ENCODE measurements at regions of chr12 and their contacts with region 1.

Region 1: DNA sequence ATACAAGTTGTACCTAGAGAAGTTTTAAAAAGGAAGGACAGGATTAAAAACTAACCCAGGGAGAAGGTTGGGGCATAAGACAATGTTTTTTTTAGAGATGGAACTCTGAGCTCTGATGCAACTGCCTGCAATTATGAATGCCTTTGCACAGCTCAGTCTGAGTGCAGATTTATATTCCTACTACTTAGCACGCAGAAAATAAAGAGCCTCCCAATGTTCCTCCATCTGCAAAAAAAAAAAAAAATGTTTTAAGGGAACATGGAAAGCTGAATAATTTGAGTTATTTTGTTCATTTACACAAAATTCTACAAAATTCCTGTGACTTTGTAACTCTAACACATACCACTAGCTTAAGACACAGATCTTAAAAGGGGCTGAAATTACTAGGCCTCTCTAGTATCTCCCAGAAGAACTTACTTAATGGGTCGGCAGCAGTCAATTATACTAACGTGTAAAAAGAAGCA is 15.7 kb downstream of the CLIP1 start:
- DNase-seq: peak; percentile 52
- ATAC-seq: peak; percentile 72
- H3K4me3 ChIP-seq: peak overlapping the region in 2 of 3 experiments; percentile 37 to 38; a peak in 3 of 6 replicates
- H3K27ac ChIP-seq: peak overlapping the region; percentile 79
- H3K4me1 ChIP-seq: peaks cover 37% of the 10 kb centered on the region
- H3K27me3 ChIP-seq: no peaks in the 10 kb centered on the region
- CTCF ChIP-seq: no peak
- EP300 ChIP-seq: peak in 1 of 2 experiments; percentile 68; a peak in 2 of 4 replicates
- POLR2A ChIP-seq: no peak
- RAD21 ChIP-seq: no peak

Region 2: DNA sequence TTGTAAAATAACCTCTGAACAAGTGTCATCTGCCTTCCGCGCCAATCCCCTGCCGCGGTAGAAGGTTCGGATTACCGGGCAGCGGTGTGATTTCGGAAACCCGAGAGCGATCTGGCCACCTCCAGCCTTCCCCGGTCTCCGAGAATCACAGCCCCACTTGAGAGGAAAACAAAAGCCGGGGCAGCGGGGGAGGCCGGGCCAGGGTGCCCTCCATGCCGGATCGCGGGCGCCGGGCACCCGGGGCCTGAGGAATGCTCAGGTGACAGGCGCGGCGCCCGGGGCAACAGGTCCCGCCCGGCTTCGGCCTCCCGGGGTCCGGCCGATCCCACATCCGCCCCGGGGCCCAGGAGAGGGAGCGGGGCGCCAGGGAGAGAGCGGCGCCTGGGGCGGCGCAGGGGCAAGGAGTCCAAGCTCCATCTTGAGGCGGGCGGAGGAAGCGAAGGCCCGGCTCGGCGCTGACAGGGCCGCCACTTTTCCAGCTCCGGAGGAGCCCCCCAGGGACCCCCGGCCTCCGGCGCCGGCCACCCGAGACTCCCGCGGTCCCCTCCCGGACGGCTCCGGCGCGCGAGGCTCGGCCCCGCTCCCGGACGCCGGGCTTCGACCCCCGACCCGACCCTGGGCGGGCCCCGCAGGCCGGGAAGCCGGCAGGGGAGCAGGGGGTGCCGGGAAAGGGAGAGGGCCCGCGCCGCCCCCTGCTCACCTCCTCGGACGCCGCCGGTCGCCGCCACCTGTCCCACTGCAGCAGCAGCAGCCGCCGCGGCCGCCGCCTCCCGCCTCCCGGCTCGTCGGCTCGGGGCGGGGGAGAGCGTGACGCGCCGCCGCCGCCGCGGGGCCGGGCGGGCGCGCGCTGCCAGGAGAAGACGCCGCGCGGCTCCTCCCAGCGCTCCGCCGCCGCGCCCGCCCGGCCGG is 15.3 kb after region 1 on chr12 and contains the start of gene CLIP1:
- CTCF ChIA-PET with region 1: no interaction called
- POLR2A ChIA-PET with region 1: interaction called, 127 read pairs
- in situ Hi-C with region 1: no loop called
- intact Hi-C with region 1: loop called (anchors 1 kb)
- DNase-seq: peak; percentile 27
- ATAC-seq: peak; percentile 67
- H3K4me3 ChIP-seq: peak within 1 kb of the TSS; percentile 80 to 82 (median 81)
- H3K27ac ChIP-seq: peak within 1 kb of the TSS; percentile 76
- H3K4me1 ChIP-seq: peaks cover 59% of the 10 kb centered on the region
- H3K27me3 ChIP-seq: no peaks in the 10 kb centered on the region; a peak in 1 of 5 replicates
- CTCF ChIP-seq: peak; percentile 49
- EP300 ChIP-seq: no peak
- POLR2A ChIP-seq: peak in 1 of 2 experiments; percentile 23; a peak in 1 of 4 replicates
- RAD21 ChIP-seq: peak; percentile 53; the same call in 1 of the 2 replicates
- total RNA-seq, gene CLIP1: 28.9 and 30.2 TPM in 2 replicates

Region 3: DNA sequence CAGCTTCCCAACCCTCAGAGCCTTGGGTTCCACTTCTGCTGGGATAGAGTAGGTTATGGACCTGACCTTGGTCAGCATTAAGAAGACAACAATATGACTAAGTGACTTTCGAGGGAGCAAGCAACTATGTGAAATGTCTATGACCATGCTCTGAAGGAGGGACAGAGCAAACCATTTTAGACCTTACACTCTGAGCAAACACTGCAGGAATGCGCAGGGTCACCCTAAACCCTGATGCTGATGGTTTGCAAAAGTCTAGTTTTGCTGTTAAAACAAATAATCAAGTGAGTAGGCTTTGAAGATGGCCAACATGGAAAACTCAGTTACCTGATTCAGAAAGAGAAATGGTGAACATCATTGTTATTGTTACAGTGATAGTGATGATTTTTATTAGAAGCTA is 85.3 kb after region 1 on chr12:
- CTCF ChIA-PET with region 1: no interaction called
- POLR2A ChIA-PET with region 1: interaction called, 11 read pairs
- in situ Hi-C with region 1: no loop called
- intact Hi-C with region 1: no loop called
- DNase-seq: peak; percentile 89
- ATAC-seq: peak; percentile 91
- H3K4me3 ChIP-seq: no peak overlapping the region
- H3K27ac ChIP-seq: peak overlapping the region; percentile 69
- H3K4me1 ChIP-seq: peaks cover 88% of the 10 kb centered on the region
- H3K27me3 ChIP-seq: no peaks in the 10 kb centered on the region
- CTCF ChIP-seq: no peak
- EP300 ChIP-seq: peak; percentile 26 to 86; a peak in 3 of 4 replicates
- POLR2A ChIP-seq: no peak
- RAD21 ChIP-seq: no peak

Region 4: DNA sequence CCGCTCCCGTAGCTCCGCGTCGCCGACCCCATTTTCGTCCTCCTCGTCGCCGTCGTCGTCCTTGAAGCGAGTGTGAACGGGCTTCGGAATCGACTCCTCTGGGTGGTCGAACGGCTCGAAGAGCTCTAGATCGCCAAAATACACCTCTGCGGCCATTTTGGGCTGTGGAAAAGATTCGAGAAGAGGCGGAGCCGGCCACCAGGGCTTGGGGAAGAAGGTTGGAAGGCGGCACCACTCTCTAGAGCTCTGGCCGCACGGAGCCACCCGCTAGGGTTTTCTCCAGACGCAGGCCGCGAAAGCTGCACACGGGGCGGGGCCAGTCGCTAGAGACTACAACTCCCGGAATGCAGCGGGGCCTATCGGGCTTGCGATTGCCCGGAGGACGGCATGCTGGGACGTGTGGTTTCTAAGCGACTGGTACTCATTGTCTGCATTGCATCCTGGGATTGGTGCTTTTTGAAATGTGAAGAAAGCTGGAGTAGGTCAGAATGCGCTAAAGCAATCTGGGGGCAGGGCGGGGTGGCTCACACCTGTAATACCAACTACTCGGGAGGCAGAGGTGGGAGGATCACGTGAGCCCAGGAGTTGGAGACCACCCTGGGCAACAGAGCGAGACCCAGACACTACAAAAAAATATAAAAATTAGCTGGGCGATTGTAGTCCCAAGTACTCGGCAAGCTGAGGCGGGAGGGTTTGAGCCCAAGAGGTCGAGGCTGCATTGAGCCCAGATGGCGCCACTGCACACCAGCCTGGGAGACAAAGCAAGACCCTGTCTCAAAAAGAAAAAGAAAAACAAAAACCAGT is 94.2 kb after region 1 on chr12 and contains the start of gene ZCCHC8:
- CTCF ChIA-PET with region 1: no interaction called
- POLR2A ChIA-PET with region 1: interaction called, 59 read pairs
- in situ Hi-C with region 1: no loop called
- intact Hi-C with region 1: no loop called
- DNase-seq: peak; percentile 96
- ATAC-seq: peak; percentile 94
- H3K4me3 ChIP-seq: peak within 1 kb of the TSS; percentile 84 to 98 (median 86)
- H3K27ac ChIP-seq: peak within 1 kb of the TSS; percentile 98
- H3K4me1 ChIP-seq: peaks cover 34% of the 10 kb centered on the region
- H3K27me3 ChIP-seq: no peaks in the 10 kb centered on the region; a peak in 1 of 5 replicates
- CTCF ChIP-seq: peak; percentile 45
- EP300 ChIP-seq: no peak; a peak in 1 of 4 replicates
- POLR2A ChIP-seq: peak; percentile 78 to 92
- RAD21 ChIP-seq: no peak
- total RNA-seq, gene ZCCHC8: 14.2 and 20.9 TPM in 2 replicates

Region 5: GRCh38 chr12:122526683-122527477 is 120.1 kb after region 1 on chr12 and contains the starts of genes KNTC1 and RSRC2:
- CTCF ChIA-PET with region 1: no interaction called
- POLR2A ChIA-PET with region 1: interaction called, 11 read pairs
- in situ Hi-C with region 1: no loop called
- intact Hi-C with region 1: no loop called
- DNase-seq: peak; percentile 99
- ATAC-seq: peak; percentile 92
- H3K4me3 ChIP-seq: peak within 1 kb of the TSS; percentile 75 to 96 (median 89)
- H3K27ac ChIP-seq: peak within 1 kb of the TSS; percentile 100
- H3K4me1 ChIP-seq: peaks cover 31% of the 10 kb centered on the region
- H3K27me3 ChIP-seq: no peaks in the 10 kb centered on the region; a peak in 1 of 5 replicates
- CTCF ChIP-seq: no peak
- EP300 ChIP-seq: peak; percentile 8 to 34
- POLR2A ChIP-seq: peak; percentile 81 to 99
- RAD21 ChIP-seq: peak; percentile 16; the same call in 1 of the 2 replicates
- total RNA-seq, gene KNTC1: 49.2 and 57.6 TPM in 2 replicates
- total RNA-seq, gene RSRC2: 77.8 and 85.8 TPM in 2 replicates

Region 6: DNA sequence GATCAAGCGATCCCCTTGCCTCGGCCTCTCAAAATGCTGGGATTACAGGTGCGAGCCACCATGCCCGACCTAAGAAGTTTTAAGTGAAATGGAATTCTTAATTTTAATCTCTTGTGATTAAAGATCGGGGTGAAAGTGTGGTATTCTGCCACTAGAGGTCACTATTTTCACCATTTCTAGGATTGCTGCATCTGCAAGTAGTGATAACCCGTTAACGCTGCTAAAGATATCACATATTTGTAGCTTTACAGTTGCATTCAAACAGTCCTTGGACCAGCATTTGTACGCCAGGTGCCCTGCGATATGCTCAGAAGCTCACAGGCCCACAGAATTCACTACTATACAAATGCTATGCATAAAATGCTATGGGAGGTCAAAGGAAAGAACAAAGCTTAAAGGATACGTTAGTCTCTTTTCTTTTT is 387.0 kb after region 1 on chr12:
- CTCF ChIA-PET with region 1: no interaction called
- POLR2A ChIA-PET with region 1: no interaction called
- in situ Hi-C with region 1: no loop called
- intact Hi-C with region 1: no loop called
- DNase-seq: peak; percentile 34
- ATAC-seq: peak; percentile 70
- H3K4me3 ChIP-seq: no peak overlapping the region
- H3K27ac ChIP-seq: no peak overlapping the region
- H3K4me1 ChIP-seq: no peaks in the 10 kb centered on the region
- H3K27me3 ChIP-seq: peaks cover 1 to 9% of the 10 kb centered on the region in 2 experiments; a peak in 3 of 5 replicates
- CTCF ChIP-seq: peak; percentile 75
- EP300 ChIP-seq: no peak
- POLR2A ChIP-seq: no peak
- RAD21 ChIP-seq: peak; percentile 43; the same call in 1 of the 2 replicates

Measured in HepG2 (cell line).